Activated CD4-positive, alpha-beta T cell treated with anti-CD3 and anti-CD28 coated beads, Interleukin-2, amount 10 ng/mL, durations not matched to agents 24 days and 14 days (primary cell): ENCODE measurements at regions of chr15 and their contacts with region 1.

Region 1: GRCh38 chr15:75801859-75802593 is 41.2 kb upstream of the UBE2Q2 start:
- DNase-seq: peak; percentile 94
- H3K4me3 Mint-ChIP-seq: peak overlapping the region; percentile 75
- H3K27ac Mint-ChIP-seq: no peak overlapping the region
- H3K4me1 Mint-ChIP-seq: peaks cover 9% of the 10 kb centered on the region
- H3K27me3 Mint-ChIP-seq: peaks cover 59% of the 10 kb centered on the region

Region 2: DNA sequence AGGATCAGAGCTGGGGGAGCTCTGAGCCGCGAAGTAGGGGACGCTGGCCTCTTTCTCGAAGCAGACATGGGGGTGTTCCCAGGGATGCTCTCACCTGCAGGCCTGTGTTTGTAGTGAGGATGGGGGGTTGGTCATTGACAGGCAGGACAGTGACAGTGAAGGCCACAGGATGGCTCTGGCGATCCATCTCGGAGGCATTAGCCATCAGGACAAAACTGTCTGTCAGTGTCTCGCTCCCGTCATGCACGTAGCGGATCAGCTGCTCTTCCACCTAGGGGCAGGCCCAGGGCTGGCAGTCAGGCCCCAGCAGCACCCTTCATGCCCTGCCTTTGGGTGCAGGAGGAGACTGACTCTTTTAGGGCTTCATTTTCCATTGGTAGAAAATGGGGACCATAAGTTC is 117.4 kb before region 1 on chr15:
- intact Hi-C with region 1: loop called (anchors 1 kb)
- DNase-seq: no peak
- H3K4me3 Mint-ChIP-seq: no peak overlapping the region
- H3K27ac Mint-ChIP-seq: no peak overlapping the region
- H3K4me1 Mint-ChIP-seq: no peaks in the 10 kb centered on the region
- H3K27me3 Mint-ChIP-seq: no peaks in the 10 kb centered on the region

Region 3: DNA sequence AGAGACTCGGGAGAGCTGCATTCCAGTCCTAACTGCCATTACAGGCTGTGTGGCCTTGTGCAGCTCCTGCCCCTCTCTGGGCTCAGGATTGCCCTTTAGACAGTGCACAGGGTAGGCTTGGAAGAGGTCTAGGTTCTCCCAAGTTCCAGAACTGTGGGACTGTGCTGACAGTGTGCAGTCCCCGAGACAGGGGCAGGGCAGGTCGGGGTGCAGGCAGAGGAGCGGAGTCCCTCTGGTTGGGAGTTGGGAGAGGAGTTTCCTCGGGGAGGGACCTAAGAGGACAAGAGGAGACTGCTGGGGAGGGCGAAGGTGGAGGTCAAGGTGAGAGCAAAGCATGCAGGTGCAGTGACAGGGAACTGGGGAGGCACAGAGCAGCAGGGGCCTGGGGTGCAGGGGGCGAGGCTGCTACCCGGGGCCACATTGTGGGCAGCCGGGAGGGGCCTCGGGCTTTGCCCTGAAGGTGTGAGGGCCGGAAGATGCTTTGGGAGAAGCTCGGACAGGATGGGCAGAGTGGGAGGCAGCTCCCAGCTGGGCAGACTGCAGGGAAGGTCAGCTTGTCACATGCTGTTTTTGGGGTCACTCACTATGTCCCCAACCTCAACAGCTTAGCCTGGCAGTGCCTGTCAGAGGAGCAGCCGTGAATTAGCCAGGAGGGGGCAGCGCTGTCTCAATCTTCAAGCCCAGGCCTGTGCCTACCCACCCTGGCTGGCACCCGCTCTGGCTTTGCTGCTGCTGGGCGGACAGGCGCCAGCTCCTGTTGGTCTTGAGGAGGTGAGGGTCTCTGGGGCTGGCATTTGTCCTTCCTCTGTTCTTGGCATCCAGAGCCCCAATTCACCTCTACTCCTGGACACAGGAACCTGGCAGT is 73.9 kb before region 1 on chr15:
- intact Hi-C with region 1: loop called (anchors 1 kb)
- DNase-seq: peak; percentile 89
- H3K4me3 Mint-ChIP-seq: no peak overlapping the region
- H3K27ac Mint-ChIP-seq: no peak overlapping the region
- H3K4me1 Mint-ChIP-seq: peaks cover 8% of the 10 kb centered on the region
- H3K27me3 Mint-ChIP-seq: peaks cover 14% of the 10 kb centered on the region

Region 4: GRCh38 chr15:75776065-75776423 is 26.0 kb before region 1 on chr15:
- intact Hi-C with region 1: no loop called
- DNase-seq: no peak
- H3K4me3 Mint-ChIP-seq: no peak overlapping the region
- H3K27ac Mint-ChIP-seq: peak overlapping the region; percentile 11
- H3K4me1 Mint-ChIP-seq: peaks cover 10% of the 10 kb centered on the region
- H3K27me3 Mint-ChIP-seq: peaks cover 17% of the 10 kb centered on the region

Region 5: GRCh38 chr15:75921729-75922703 is 120.0 kb after region 1 on chr15:
- intact Hi-C with region 1: loop called (anchors 10 kb)
- DNase-seq: peak; percentile 73
- H3K4me3 Mint-ChIP-seq: no peak overlapping the region
- H3K27ac Mint-ChIP-seq: no peak overlapping the region
- H3K4me1 Mint-ChIP-seq: peaks cover 24% of the 10 kb centered on the region
- H3K27me3 Mint-ChIP-seq: no peaks in the 10 kb centered on the region